WTC11 (cell line): ENCODE measurements at regions of chr10 and their contacts with region 1.

Region 1: GRCh38 chr10:86632009-86632800 is 22.1 kb upstream of the OPN4 start:
- DNase-seq: peak; percentile 86
- ATAC-seq: peak; percentile 98
- H3K4me3 Mint-ChIP-seq: peak overlapping the region; percentile 70
- H3K27ac Mint-ChIP-seq: no peak overlapping the region
- H3K4me1 Mint-ChIP-seq: peaks cover 15% of the 10 kb centered on the region
- H3K27me3 Mint-ChIP-seq: peaks cover 27% of the 10 kb centered on the region
- CTCF ChIP-seq: no peak

Region 2: DNA sequence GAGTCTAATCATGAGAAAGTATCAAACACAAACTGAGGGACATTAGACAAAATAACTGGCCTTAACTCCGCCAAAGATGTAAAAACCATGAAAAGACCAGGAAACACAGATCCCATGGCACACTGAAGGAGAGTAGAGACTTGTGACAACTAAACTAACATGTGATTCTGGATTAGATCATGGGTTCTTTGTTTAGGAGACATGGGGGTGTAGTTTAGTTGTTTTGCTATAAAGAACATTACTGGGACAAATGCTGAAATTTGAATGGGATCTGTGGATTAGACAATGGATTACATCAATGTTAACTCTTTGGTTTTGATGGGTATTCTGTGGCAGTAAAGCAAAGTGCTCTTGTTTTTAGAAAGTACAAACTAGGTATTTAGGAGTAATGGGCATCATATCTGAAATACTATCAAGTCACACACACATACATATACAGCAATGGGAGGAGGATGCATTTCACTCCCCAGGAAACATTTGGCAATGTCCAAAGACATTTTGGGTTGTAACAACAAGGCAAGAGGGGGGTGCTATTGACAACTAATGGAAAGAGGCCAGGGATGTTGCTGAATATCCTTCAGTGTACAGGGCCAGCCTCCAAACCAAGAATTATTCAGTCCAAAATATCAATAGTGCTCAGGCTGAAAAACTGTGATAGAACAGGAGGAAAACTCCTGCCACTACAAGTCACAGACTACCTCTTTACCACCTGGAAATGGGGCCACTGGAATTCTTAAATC is 143.0 kb before region 1 on chr10:
- CTCF ChIA-PET with region 1: no interaction called
- POLR2A ChIA-PET with region 1: no interaction called
- DNase-seq: no peak
- ATAC-seq: no peak
- H3K4me3 Mint-ChIP-seq: no peak overlapping the region
- H3K27ac Mint-ChIP-seq: no peak overlapping the region
- H3K4me1 Mint-ChIP-seq: no peaks in the 10 kb centered on the region
- H3K27me3 Mint-ChIP-seq: no peaks in the 10 kb centered on the region
- CTCF ChIP-seq: no peak

Region 3: GRCh38 chr10:86644152-86644793 is 12.1 kb after region 1 on chr10:
- CTCF ChIA-PET with region 1: interaction called, 17 read pairs
- POLR2A ChIA-PET with region 1: no interaction called
- DNase-seq: no peak
- ATAC-seq: peak; percentile 73
- H3K4me3 Mint-ChIP-seq: no peak overlapping the region
- H3K27ac Mint-ChIP-seq: no peak overlapping the region
- H3K4me1 Mint-ChIP-seq: peaks cover 6% of the 10 kb centered on the region
- H3K27me3 Mint-ChIP-seq: no peaks in the 10 kb centered on the region
- CTCF ChIP-seq: no peak

Region 4: DNA sequence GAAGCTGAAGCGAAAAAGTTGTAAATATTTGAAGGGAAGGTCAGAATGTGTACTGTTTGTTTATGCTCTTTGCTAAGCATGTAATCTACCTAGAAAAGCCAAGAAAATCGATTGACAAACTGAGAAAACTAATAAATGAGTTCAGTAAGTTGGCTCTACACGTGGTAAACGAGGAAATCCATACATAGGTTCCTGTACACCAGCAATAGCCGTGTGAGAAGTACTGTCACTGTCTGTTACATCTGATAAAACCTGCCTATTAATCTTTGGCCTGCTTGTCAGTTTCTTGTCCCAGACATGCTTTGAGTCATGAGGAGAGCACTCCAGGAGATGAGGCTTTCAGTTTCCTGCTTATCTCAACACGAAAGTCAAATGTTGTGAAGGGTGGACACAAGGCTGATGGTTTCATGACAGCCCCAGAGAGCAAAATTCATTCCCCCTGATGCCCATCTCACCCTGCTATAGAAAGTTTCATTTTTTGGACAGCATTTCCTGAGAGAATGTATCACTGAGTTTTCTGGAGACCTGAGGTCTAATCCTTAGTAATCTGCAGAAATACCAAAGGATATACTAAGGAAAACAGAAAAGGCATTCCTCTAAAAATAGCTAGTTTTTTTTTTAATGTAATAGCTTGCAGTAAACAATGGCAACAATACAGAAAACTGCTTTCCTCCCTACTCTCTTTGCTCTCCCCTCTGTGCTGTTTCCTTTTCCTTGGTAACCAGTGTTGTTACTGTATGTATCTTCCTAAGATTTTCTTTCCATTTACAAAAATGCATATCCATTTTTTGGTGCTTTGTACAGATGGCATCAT is 143.1 kb after region 1 on chr10:
- CTCF ChIA-PET with region 1: no interaction called
- POLR2A ChIA-PET with region 1: no interaction called
- DNase-seq: no peak
- ATAC-seq: no peak
- H3K4me3 Mint-ChIP-seq: no peak overlapping the region
- H3K27ac Mint-ChIP-seq: peak overlapping the region; percentile 93
- H3K4me1 Mint-ChIP-seq: peaks cover 59% of the 10 kb centered on the region
- H3K27me3 Mint-ChIP-seq: no peaks in the 10 kb centered on the region
- CTCF ChIP-seq: no peak

Region 5: DNA sequence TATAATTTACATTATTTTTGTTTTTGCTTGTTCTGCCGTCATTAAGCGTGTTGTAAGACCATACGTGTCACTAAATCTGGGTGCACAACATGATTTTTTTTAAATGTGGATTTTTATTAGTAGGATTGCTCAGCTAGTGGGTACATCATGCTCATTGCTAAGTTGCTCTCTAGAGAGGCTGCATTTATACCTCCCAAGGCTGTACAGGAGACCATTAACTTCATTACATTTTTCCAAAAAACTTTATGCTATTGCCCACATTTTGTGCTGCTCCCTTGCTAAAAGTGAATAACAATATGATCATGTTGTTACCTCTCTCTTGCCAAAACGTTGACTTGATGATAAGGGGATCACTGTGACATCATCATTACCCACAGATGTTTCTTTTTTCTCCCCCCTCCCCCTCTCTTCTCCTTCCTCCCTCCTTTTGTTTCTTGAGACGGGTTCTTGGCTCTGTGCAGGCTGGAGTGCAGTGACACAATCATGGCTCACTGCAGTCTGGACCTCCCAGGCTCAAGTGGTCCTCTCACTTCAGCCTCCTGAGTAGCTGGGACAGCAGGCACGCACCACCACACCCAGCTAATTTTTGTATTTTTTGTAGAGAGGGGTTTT is 189.3 kb after region 1 on chr10:
- CTCF ChIA-PET with region 1: no interaction called
- POLR2A ChIA-PET with region 1: no interaction called
- DNase-seq: no peak
- ATAC-seq: no peak
- H3K4me3 Mint-ChIP-seq: no peak overlapping the region
- H3K27ac Mint-ChIP-seq: peak overlapping the region; percentile 77
- H3K4me1 Mint-ChIP-seq: peaks cover 73% of the 10 kb centered on the region
- H3K27me3 Mint-ChIP-seq: no peaks in the 10 kb centered on the region
- CTCF ChIP-seq: no peak

Region 6: DNA sequence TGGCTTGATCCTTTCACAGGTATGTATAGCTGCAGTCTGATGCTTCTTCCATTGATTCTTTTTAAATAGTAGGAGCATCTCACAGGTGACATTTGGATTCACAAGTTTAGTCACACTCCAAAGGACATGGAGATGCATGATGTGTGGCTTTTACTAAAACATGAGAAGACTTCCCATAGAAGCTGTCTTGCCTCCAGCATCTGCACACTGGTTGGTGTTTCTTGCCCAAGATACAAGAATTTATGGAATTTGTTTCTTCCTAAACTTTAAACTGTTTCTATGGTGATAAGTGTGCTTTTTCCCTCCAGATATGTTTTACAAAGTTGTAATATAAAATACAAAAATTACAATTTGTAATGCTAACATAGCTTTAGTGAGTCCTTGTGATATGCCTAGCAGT is 360.2 kb after region 1 on chr10:
- CTCF ChIA-PET with region 1: no interaction called
- POLR2A ChIA-PET with region 1: no interaction called
- DNase-seq: no peak
- ATAC-seq: no peak
- H3K4me3 Mint-ChIP-seq: no peak overlapping the region
- H3K27ac Mint-ChIP-seq: no peak overlapping the region
- H3K4me1 Mint-ChIP-seq: peaks cover 10% of the 10 kb centered on the region; the same call in 1 of the 2 replicates
- H3K27me3 Mint-ChIP-seq: no peaks in the 10 kb centered on the region; the same call in 1 of the 2 replicates
- CTCF ChIP-seq: no peak